ENCODE measurements at regions of chr11 and their contacts with region 1.

Region 1: GRCh38 chr11:94623120-94623735 is 56.1 kb downstream of the PIWIL4 start:
- DNase-seq: peak; percentile 78
- ATAC-seq: peak; percentile 94
- H3K4me3 ChIP-seq: no peak overlapping the region
- H3K27ac ChIP-seq: peak overlapping the region; percentile 3; the same call in 1 of the 2 replicates
- H3K4me1 ChIP-seq: no peaks in the 10 kb centered on the region
- H3K27me3 ChIP-seq: no peaks in the 10 kb centered on the region
- CTCF ChIP-seq: peak; percentile 87

Region 2: DNA sequence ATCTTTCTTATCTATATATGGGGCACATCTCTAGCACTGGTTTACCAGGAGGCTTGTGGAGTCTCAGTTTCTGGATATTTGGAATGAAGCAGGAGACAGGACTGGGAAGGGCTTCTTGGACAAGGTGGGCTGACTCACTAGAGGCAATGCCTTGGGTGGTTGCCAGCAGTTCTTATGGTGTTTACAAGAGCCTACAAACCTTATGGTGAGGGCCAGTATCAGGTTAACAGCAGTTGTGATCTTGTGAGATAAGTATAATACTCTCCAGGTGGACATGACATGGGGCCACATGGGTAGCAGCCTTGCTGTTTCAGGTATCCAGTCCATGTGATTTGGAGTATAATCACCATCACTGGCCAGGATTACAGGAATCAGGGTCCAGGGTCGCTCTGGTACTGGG is 69.3 kb before region 1 on chr11:
- CTCF ChIA-PET with region 1: no interaction called
- POLR2A ChIA-PET with region 1: interaction called, 17 read pairs
- in situ Hi-C with region 1: no loop called
- intact Hi-C with region 1: no loop called
- DNase-seq: no peak
- ATAC-seq: peak; percentile 49; the same call in 1 of the 2 replicates
- H3K4me3 ChIP-seq: no peak overlapping the region
- H3K27ac ChIP-seq: no peak overlapping the region
- H3K4me1 ChIP-seq: peaks cover 1% of the 10 kb centered on the region; the same call in 1 of the 2 replicates
- H3K27me3 ChIP-seq: no peaks in the 10 kb centered on the region
- CTCF ChIP-seq: no peak

Region 3: GRCh38 chr11:94741022-94741679 is 117.9 kb after region 1 on chr11:
- CTCF ChIA-PET with region 1: no interaction called
- POLR2A ChIA-PET with region 1: interaction called, 3 read pairs
- in situ Hi-C with region 1: no loop called
- intact Hi-C with region 1: loop called (anchors 5 kb)
- DNase-seq: peak; percentile 59
- ATAC-seq: peak; percentile 78
- H3K4me3 ChIP-seq: peak overlapping the region; percentile 53 to 69
- H3K27ac ChIP-seq: peak overlapping the region; percentile 66
- H3K4me1 ChIP-seq: peaks cover 54% of the 10 kb centered on the region
- H3K27me3 ChIP-seq: peaks cover 7% of the 10 kb centered on the region; the same call in 1 of the 2 replicates
- CTCF ChIP-seq: peak; percentile 77

Region 4: GRCh38 chr11:94757037-94757735 is 134.0 kb after region 1 on chr11:
- CTCF ChIA-PET with region 1: no interaction called
- POLR2A ChIA-PET with region 1: no interaction called
- in situ Hi-C with region 1: no loop called
- intact Hi-C with region 1: no loop called
- DNase-seq: no peak
- ATAC-seq: no peak
- H3K4me3 ChIP-seq: no peak overlapping the region
- H3K27ac ChIP-seq: no peak overlapping the region
- H3K4me1 ChIP-seq: no peaks in the 10 kb centered on the region
- H3K27me3 ChIP-seq: peaks cover 3% of the 10 kb centered on the region; the same call in 1 of the 2 replicates
- CTCF ChIP-seq: no peak

Region 5: GRCh38 chr11:94767761-94768601 is 144.8 kb after region 1 on chr11 and contains the start of gene AMOTL1:
- CTCF ChIA-PET with region 1: interaction called, 3 read pairs
- POLR2A ChIA-PET with region 1: no interaction called
- in situ Hi-C with region 1: no loop called
- intact Hi-C with region 1: loop called (anchors 5 kb)
- DNase-seq: no peak
- ATAC-seq: peak; percentile 90
- H3K4me3 ChIP-seq: peak within 1 kb of the TSS; percentile 67 to 70
- H3K27ac ChIP-seq: peak within 1 kb of the TSS; percentile 62
- H3K4me1 ChIP-seq: peaks cover 28% of the 10 kb centered on the region
- H3K27me3 ChIP-seq: peaks cover 30% of the 10 kb centered on the region
- CTCF ChIP-seq: no peak; the same call in 1 of the 2 replicates
- total RNA-seq, gene AMOTL1: 16.0 TPM

Region 6: DNA sequence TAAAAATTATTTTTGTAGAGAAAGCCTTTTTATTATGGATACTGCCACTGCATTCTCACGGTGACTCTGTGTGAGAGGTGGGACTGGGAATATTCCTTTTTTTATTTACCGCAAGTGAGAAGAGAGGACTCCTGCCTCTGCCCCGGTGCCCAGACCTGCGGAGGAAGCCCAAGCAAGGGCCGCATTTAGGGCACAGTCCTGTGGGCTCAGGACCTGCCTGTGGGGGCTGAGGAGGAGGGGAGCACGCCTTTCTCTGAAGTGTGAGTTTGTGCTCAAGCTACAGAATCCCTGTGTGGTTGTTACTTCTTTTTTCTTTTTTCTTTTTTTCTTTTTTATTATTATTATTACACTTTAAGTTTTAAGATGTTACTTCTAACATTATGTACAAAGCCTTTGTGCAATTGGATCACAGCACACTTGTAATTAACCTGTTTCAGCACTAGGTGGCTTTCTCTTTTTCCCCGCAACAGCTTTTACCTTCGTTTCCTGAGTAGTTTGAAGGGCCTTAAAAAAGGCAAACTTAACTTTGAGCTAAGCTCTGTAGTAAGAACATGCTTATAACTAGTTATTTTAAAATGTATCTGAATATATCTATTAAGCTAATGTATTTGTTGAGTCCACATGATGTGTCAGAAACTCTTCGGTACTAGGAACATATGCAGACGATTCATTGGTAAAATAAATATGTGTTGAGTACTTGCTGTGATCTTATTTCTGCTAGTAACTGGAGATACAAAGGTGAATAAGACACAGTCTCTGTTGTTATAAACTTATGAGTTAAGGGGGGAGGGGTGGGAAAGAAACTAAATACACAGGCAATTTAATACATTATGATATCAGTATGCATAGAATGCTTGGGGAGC is 163.3 kb after region 1 on chr11:
- CTCF ChIA-PET with region 1: interaction called, 11 read pairs
- POLR2A ChIA-PET with region 1: no interaction called
- in situ Hi-C with region 1: no loop called
- intact Hi-C with region 1: no loop called
- DNase-seq: no peak
- ATAC-seq: peak; percentile 74
- H3K4me3 ChIP-seq: no peak overlapping the region
- H3K27ac ChIP-seq: no peak overlapping the region
- H3K4me1 ChIP-seq: peaks cover 27% of the 10 kb centered on the region
- H3K27me3 ChIP-seq: no peaks in the 10 kb centered on the region
- CTCF ChIP-seq: peak; percentile 80

Region 7: GRCh38 chr11:94897330-94897768 is 274.1 kb after region 1 on chr11:
- CTCF ChIA-PET with region 1: interaction called, 9 read pairs
- POLR2A ChIA-PET with region 1: no interaction called
- in situ Hi-C with region 1: no loop called
- intact Hi-C with region 1: loop called (anchors 1 kb)
- DNase-seq: no peak
- ATAC-seq: peak; percentile 82
- H3K4me3 ChIP-seq: no peak overlapping the region
- H3K27ac ChIP-seq: no peak overlapping the region
- H3K4me1 ChIP-seq: no peaks in the 10 kb centered on the region
- H3K27me3 ChIP-seq: no peaks in the 10 kb centered on the region
- CTCF ChIP-seq: peak; percentile 95

Region 8: GRCh38 chr11:94973099-94973968 is 350.1 kb after region 1 on chr11 and contains the starts of genes CWC15 and KDM4D:
- CTCF ChIA-PET with region 1: no interaction called
- POLR2A ChIA-PET with region 1: no interaction called
- in situ Hi-C with region 1: no loop called
- intact Hi-C with region 1: loop called (anchors 2 kb)
- DNase-seq: peak; percentile 75
- ATAC-seq: peak; percentile 100
- H3K4me3 ChIP-seq: peak within 1 kb of the TSS; percentile 93
- H3K27ac ChIP-seq: peak within 1 kb of the TSS; percentile 99
- H3K4me1 ChIP-seq: peaks cover 10% of the 10 kb centered on the region; the same call in 1 of the 2 replicates
- H3K27me3 ChIP-seq: no peaks in the 10 kb centered on the region
- CTCF ChIP-seq: no peak
- total RNA-seq, gene CWC15: 58.9 TPM
- total RNA-seq, gene KDM4D: 0.87 TPM